ENCODE measurements at regions of chr2 and their contacts with region 1.

Region 1: DNA sequence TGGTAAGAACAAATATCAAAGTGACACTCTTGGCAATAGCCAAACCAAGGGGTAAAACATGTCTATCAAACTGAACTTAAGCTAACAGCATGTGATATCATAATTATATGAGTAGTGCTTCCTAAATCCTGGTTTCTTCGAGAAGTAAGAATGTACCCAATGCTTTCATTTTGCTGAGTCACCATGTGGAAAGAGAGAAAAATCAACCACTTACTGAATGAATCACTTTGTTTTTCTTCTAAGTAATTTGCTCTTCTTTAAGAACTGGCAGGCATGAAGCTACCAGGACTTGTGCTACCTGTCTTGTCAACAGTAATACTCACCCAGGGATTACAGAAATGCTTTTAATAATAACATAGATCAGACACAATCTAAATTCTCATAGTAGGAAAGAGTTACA is 19.0 kb upstream of the DUSP19 start:
- DNase-seq: no peak
- H3K4me3 ChIP-seq: no peak overlapping the region
- H3K27ac ChIP-seq: no peak overlapping the region
- H3K27me3 ChIP-seq: no peaks in the 10 kb centered on the region
- CTCF ChIP-seq: no peak

Region 2: DNA sequence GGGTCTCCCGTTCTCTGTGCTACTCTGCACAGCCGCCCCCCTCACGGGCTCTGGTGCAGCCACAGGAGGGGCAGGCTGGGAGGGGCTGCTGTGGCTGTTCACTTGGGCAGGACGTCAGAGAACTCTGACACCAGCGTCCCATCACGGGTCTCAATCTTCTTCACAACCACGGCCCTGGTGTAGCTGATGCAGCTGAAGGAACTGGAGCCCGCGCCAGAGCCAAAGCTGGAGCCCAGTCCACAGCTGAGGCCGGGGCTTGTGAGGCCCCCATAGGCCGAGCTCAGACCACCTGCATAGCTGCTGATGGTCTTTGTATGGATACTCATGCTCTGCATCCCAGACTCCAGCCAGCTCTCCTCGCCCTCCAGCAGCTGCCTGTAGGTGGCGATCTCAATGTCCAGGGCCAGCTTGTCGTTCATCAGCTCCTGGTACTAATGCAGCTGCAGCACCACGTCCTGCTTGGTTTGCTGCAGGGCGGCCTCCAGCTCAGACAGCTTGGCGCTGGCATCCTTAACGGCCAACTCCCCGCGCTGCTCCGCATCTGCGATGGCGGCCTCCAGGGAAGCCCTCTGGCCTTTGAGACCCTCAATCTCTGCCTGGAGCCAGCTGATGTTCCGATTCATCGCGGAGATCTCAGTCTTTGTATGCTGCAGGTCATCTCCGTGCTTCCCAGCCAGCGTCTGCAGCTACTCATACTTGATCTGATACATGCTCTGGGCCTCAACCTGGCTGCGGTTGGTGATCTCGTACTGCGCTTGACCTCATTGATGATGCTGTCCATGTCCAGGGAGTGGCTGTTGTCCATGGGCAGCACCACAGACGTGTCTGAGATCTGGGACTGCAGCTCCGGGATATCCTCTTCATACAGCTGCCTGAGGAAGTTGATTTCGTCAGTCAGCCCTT is 11.6 kb after region 1 on chr2:
- CTCF ChIA-PET with region 1: interaction called, 27 read pairs
- POLR2A ChIA-PET with region 1: interaction called, 4 read pairs
- DNase-seq: no peak
- H3K4me3 ChIP-seq: no peak overlapping the region
- H3K27ac ChIP-seq: no peak overlapping the region
- H3K27me3 ChIP-seq: peaks cover 12% of the 10 kb centered on the region
- CTCF ChIP-seq: peak; percentile 70

Measured in AG04450 (cell line).